SK-N-SH (cell line): ENCODE measurements at regions of chr3 and their contacts with region 1.

Region 1: DNA sequence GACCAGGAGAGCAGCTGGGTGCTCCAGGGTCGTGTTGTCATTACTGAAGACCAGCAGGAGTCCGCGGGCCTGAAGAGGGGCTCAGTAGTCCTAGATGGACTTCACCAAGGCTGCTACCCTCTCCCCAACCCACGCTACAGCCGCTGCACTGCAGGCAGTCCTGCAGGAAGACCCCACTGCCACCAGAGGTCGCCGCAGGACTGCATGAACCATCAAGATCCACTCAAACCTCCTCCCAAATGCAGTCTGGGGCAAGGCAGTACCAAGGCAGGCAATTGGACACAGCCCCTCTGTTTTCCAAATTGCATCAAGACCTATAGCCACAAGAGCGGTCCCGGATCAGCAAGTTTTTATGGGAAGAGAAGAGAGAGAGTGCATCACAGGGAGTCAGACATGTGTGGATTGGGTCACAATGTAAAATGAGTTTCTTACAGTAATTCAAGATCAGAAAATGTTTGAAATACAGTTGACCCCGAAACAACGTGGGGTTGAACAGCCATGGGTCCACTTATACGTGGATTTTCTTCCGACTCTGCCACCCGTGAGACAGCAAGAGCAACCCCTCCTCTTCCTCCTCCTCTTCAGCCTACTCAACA is 46.7 kb downstream of the DZIP1L start:
- DNase-seq: peak; percentile 87
- H3K4me3 ChIP-seq: no peak overlapping the region
- H3K27ac ChIP-seq: no peak overlapping the region
- H3K4me1 ChIP-seq: no peaks in the 10 kb centered on the region; a peak in 1 of 4 replicates
- H3K27me3 ChIP-seq: no peaks in the 10 kb centered on the region
- CTCF ChIP-seq: peak; percentile 98
- EP300 ChIP-seq: no peak
- RAD21 ChIP-seq: peak; percentile 97

Region 2: DNA sequence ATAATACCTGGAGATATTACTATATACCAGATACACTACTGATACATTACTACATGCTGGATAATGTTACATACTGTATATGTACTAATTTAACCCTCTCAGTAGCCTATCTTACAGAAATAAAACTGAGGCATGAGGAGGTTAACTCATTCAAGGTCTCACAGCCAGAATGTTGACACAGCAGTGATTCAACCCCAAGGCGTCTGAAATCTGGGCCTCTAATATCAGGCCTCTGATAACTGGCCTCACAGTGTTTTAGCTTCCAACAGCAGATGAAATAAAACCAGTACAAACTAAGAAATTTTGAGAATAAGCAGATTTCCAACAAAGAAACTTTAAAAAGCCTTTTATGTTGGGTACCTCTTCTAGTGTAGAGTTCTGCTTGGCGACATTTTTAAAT is 23.3 kb after region 1 on chr3:
- CTCF ChIA-PET with region 1: interaction called, 13 read pairs
- POLR2A ChIA-PET with region 1: no interaction called
- DNase-seq: no peak
- H3K4me3 ChIP-seq: no peak overlapping the region
- H3K27ac ChIP-seq: no peak overlapping the region
- H3K4me1 ChIP-seq: peaks cover 0 to 11% of the 10 kb centered on the region in 2 experiments; a peak in 2 of 4 replicates
- H3K27me3 ChIP-seq: no peaks in the 10 kb centered on the region
- CTCF ChIP-seq: no peak
- EP300 ChIP-seq: no peak
- RAD21 ChIP-seq: no peak